ENCODE measurements at regions of chr13 and their contacts with region 1.

Region 1: GRCh38 chr13:27362064-27362883 is 62.1 kb upstream of the GTF3A start:
- DNase-seq: peak; percentile 81 to 97 (median 88)
- ATAC-seq: peak; percentile 99
- H3K4me3 ChIP-seq: peak overlapping the region; percentile 19 to 37
- H3K27ac ChIP-seq: no peak overlapping the region
- H3K4me1 ChIP-seq: peaks cover 6 to 10% of the 10 kb centered on the region in 2 donors
- H3K27me3 ChIP-seq: peaks cover 0 to 53% of the 10 kb centered on the region in 2 donors
- CTCF ChIP-seq: peak; percentile 88 to 94

Region 2: GRCh38 chr13:26985285-26985878 is 376.9 kb before region 1 on chr13:
- intact Hi-C with region 1: loop called in 1 of 2 experiments (anchors 5 kb)
- DNase-seq: peak in 2 of 4 donors; percentile 70 to 83
- ATAC-seq: peak; percentile 76
- H3K4me3 ChIP-seq: no peak overlapping the region
- H3K27ac ChIP-seq: no peak overlapping the region
- H3K4me1 ChIP-seq: peaks cover 3 to 27% of the 10 kb centered on the region in 2 donors
- H3K27me3 ChIP-seq: peaks cover 0 to 13% of the 10 kb centered on the region in 2 donors
- CTCF ChIP-seq: peak; percentile 59 to 76

Region 3: DNA sequence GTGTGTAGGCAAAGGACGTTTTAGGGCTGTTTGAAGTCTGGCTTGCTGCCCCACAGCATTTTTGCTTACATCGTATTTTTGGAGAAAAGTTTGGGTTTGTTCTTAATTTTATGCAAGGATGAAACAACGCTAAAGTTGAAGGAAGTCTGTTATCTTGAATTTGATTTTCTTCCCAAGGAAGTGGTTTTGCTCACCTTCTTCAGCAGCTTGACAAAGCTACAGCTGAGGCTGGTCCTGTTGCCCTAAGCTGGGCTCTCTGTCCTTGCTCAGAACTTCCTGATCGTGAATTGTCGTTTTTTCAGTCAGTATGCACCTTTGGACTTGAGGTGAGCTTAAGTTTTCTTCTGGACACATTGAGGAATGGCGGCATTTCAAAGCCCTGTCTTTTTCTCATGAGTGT is 367.9 kb after region 1 on chr13:
- intact Hi-C with region 1: no loop called
- DNase-seq: no peak
- ATAC-seq: no peak
- H3K4me3 ChIP-seq: no peak overlapping the region
- H3K27ac ChIP-seq: no peak overlapping the region
- H3K4me1 ChIP-seq: no peaks in the 10 kb centered on the region
- H3K27me3 ChIP-seq: peaks cover 0 to 3% of the 10 kb centered on the region in 2 donors
- CTCF ChIP-seq: no peak

Region 4: DNA sequence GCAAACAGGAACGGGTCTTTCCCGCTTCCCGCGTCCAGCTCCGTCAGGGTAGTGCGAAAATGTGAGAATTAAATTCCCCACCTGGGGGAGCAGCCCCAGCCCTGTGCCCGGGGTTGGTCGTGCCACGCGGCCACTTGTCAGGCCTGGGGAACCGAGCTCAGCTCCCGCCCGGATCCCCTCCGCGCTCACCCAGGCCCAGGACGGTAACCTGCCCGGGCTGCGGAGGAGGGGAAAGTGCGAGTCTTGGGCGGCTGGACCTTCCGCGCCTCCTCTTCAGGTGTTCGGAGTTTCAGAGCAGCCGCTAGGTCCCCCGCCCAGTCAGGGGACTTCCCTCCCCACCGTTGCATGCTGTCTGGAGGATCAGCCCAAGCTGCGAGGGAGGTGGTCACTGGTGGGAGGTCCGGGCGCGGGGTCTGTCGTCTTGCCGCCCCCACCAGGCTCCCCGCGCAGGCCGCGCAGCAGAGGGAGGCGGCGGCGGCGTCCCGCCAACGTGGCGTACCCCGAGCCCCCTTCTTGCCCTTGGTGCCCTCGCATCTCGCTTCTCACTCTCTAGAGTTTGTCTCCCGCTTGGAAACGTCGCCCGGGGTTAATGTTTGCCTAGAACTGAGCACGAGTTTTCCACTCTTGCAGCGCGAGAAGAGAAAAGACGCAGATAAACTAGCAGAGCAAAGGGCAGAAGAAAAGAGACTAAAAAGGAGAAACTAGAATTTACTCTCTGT is 618.2 kb after region 1 on chr13:
- intact Hi-C with region 1: loop called in 1 of 2 experiments (anchors 5 kb)
- DNase-seq: no peak
- ATAC-seq: no peak
- H3K4me3 ChIP-seq: no peak overlapping the region
- H3K27ac ChIP-seq: no peak overlapping the region
- H3K4me1 ChIP-seq: peaks cover 4 to 24% of the 10 kb centered on the region in 2 donors
- H3K27me3 ChIP-seq: peaks cover 81 to 100% of the 10 kb centered on the region in 2 donors
- CTCF ChIP-seq: no peak